ENCODE measurements at regions of chr2 and their contacts with region 1.

Region 1: GRCh38 chr2:34096562-34097171 is 497.6 kb upstream of the FAM98A start:
- DNase-seq: peak; percentile 35 to 62
- H3K4me3 ChIP-seq: no peak overlapping the region
- H3K4me3 Mint-ChIP-seq: no peak overlapping the region
- H3K27ac Mint-ChIP-seq: no peak overlapping the region
- H3K4me1 ChIP-seq: no peaks in the 10 kb centered on the region
- H3K4me1 Mint-ChIP-seq: no peaks in the 10 kb centered on the region
- H3K27me3 ChIP-seq: no peaks in the 10 kb centered on the region
- H3K27me3 Mint-ChIP-seq: peaks cover 6% of the 10 kb centered on the region
- CTCF ChIP-seq: peak; percentile 70 to 71

Region 2: GRCh38 chr2:33673937-33674336 is 422.7 kb before region 1 on chr2:
- CTCF ChIA-PET with region 1: no interaction called
- POLR2A ChIA-PET with region 1: no interaction called
- intact Hi-C with region 1: loop called (anchors 1 kb)
- DNase-seq: no peak
- H3K4me3 ChIP-seq: no peak overlapping the region
- H3K4me3 Mint-ChIP-seq: no peak overlapping the region
- H3K27ac Mint-ChIP-seq: no peak overlapping the region
- H3K4me1 ChIP-seq: no peaks in the 10 kb centered on the region
- H3K4me1 Mint-ChIP-seq: no peaks in the 10 kb centered on the region
- H3K27me3 ChIP-seq: no peaks in the 10 kb centered on the region
- H3K27me3 Mint-ChIP-seq: peaks cover 7% of the 10 kb centered on the region
- CTCF ChIP-seq: no peak

Region 3: DNA sequence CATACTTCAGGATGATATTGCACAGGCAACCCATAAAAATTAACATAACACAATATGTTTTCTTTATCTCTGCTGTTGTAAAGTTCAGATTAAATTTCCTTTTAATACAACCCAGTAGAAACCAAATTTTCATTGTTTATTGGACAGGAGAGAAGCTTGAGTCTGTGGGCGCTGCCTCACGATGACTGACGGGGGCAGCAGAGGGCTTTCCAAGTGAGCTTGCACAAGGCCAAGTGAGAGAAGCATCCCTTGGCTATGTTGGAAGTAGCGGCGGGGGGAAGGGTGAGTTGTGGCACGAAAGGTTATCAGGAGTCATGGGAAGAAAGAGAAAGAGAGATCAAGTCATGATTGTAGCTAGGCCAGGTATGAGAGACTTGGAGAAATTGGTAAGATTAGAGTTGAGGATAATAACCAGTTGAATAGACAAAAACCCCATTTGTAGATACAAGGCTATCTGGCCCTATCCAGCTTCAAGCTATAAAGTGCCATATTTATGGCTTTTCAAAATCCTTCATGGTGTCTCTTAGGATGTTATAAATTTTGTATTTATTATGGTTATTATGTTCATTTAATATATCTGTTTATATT is 83.9 kb before region 1 on chr2:
- CTCF ChIA-PET with region 1: no interaction called
- POLR2A ChIA-PET with region 1: no interaction called
- intact Hi-C with region 1: loop called (anchors 1 kb)
- DNase-seq: peak; percentile 75 to 77
- H3K4me3 ChIP-seq: no peak overlapping the region
- H3K4me3 Mint-ChIP-seq: no peak overlapping the region
- H3K27ac Mint-ChIP-seq: no peak overlapping the region
- H3K4me1 ChIP-seq: 0 out of 2 replicates have a peak, but pooled peaks cover 3% of the 10 kb centered on the region
- H3K4me1 Mint-ChIP-seq: no peaks in the 10 kb centered on the region
- H3K27me3 ChIP-seq: no peaks in the 10 kb centered on the region
- H3K27me3 Mint-ChIP-seq: peaks cover 9% of the 10 kb centered on the region
- CTCF ChIP-seq: peak; percentile 80

Region 4: DNA sequence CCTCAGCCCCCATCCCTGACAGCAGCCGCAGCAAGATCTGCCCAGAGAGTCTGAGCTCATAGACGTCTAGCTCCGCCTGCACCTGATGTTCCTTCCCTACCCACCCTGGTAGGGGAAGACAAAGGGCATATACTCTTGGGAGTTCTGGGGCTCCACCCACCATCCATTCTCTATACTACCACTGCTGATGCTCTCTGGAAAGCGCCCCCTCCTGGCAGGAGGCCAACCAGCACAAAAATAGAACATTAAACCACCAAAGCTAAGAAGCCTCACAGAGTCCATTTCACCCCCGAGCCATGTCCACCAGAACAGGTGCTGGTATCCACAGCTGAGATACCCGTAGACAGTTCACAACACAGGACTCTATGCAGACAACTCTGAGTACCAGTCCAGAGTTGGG is 165.0 kb after region 1 on chr2:
- CTCF ChIA-PET with region 1: no interaction called
- POLR2A ChIA-PET with region 1: no interaction called
- intact Hi-C with region 1: loop called (anchors 5 kb)
- DNase-seq: no peak
- H3K4me3 ChIP-seq: no peak overlapping the region
- H3K4me3 Mint-ChIP-seq: no peak overlapping the region
- H3K27ac Mint-ChIP-seq: no peak overlapping the region
- H3K4me1 ChIP-seq: no peaks in the 10 kb centered on the region
- H3K4me1 Mint-ChIP-seq: no peaks in the 10 kb centered on the region
- H3K27me3 ChIP-seq: no peaks in the 10 kb centered on the region
- H3K27me3 Mint-ChIP-seq: no peaks in the 10 kb centered on the region
- CTCF ChIP-seq: no peak

Region 5: GRCh38 chr2:34570266-34570872 is 473.7 kb after region 1 on chr2:
- CTCF ChIA-PET with region 1: no interaction called
- POLR2A ChIA-PET with region 1: no interaction called
- intact Hi-C with region 1: loop called (anchors 2 kb)
- DNase-seq: peak; percentile 54 to 59
- H3K4me3 ChIP-seq: no peak overlapping the region
- H3K4me3 Mint-ChIP-seq: no peak overlapping the region
- H3K27ac Mint-ChIP-seq: no peak overlapping the region
- H3K4me1 ChIP-seq: no peaks in the 10 kb centered on the region
- H3K4me1 Mint-ChIP-seq: no peaks in the 10 kb centered on the region
- H3K27me3 ChIP-seq: no peaks in the 10 kb centered on the region
- H3K27me3 Mint-ChIP-seq: no peaks in the 10 kb centered on the region
- CTCF ChIP-seq: peak; percentile 44 to 68

Region 6: DNA sequence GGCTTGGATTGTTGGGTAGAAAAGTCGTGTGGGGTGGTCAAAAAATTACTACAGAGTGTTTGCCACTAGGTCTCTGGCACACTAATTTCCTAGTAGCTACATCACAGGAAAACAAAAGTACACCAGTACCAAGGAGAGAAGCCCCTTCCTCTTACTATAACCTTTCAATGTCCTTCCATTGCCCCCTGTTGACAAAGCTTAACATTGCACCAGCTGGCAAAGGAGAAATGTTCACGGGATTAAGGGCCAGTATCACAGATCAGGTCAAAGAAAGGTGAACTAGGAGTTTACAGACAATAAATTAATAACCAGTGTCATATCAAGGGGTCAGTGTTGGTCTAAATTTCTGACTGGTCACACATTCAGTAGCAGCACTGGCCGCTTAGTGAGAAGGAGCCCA is 642.0 kb after region 1 on chr2:
- CTCF ChIA-PET with region 1: interaction called, 3 read pairs
- POLR2A ChIA-PET with region 1: no interaction called
- intact Hi-C with region 1: loop called (anchors 1 kb)
- DNase-seq: peak in 1 of 2 experiments; percentile 34
- H3K4me3 ChIP-seq: no peak overlapping the region
- H3K4me3 Mint-ChIP-seq: no peak overlapping the region
- H3K27ac Mint-ChIP-seq: no peak overlapping the region
- H3K4me1 ChIP-seq: no peaks in the 10 kb centered on the region
- H3K4me1 Mint-ChIP-seq: no peaks in the 10 kb centered on the region
- H3K27me3 ChIP-seq: no peaks in the 10 kb centered on the region
- H3K27me3 Mint-ChIP-seq: peaks cover 3% of the 10 kb centered on the region
- CTCF ChIP-seq: peak; percentile 37 to 47

Region 7: GRCh38 chr2:35114765-35115164 is 1018.1 kb after region 1 on chr2:
- CTCF ChIA-PET with region 1: no interaction called
- POLR2A ChIA-PET with region 1: no interaction called
- intact Hi-C with region 1: loop called (anchors 1 kb)
- DNase-seq: peak in 1 of 2 experiments; percentile 26
- H3K4me3 ChIP-seq: no peak overlapping the region
- H3K4me3 Mint-ChIP-seq: no peak overlapping the region
- H3K27ac Mint-ChIP-seq: no peak overlapping the region
- H3K4me1 ChIP-seq: no peaks in the 10 kb centered on the region
- H3K4me1 Mint-ChIP-seq: no peaks in the 10 kb centered on the region
- H3K27me3 ChIP-seq: no peaks in the 10 kb centered on the region
- H3K27me3 Mint-ChIP-seq: peaks cover 5% of the 10 kb centered on the region
- CTCF ChIP-seq: peak in 1 of 2 experiments; percentile 45

Measured in Caco-2 (cell line).